ENCODE measurements at regions of chr11 and their contacts with region 1.

Region 1: GRCh38 chr11:101848262-101848661 is 66.5 kb upstream of the CEP126 start:
- DNase-seq: no peak
- H3K4me3 ChIP-seq: no peak overlapping the region
- CTCF ChIP-seq: no peak

Region 2: DNA sequence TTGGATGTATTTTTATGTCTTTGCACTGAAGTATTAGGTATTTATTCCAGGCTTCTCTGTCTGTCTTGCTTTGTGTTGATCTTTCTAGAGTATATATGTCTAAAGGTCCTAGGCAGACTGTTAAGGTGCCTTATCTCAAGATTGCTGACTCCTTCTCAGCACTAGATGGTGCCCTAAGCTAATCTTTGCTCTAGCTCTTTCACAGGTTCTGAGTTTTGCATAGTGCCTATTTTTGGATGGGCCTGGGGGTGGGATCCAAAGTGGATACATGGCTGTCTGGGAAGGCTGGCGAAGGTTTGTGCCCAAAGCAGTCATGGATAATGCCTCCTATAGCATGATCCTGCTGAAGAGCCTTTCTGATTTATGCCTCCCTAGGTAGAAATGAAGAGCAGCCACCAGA is 419.3 kb before region 1 on chr11:
- CTCF ChIA-PET with region 1: interaction called, 78 read pairs
- POLR2A ChIA-PET with region 1: no interaction called
- DNase-seq: no peak
- H3K4me3 ChIP-seq: no peak overlapping the region
- CTCF ChIP-seq: peak; percentile 45

Region 3: DNA sequence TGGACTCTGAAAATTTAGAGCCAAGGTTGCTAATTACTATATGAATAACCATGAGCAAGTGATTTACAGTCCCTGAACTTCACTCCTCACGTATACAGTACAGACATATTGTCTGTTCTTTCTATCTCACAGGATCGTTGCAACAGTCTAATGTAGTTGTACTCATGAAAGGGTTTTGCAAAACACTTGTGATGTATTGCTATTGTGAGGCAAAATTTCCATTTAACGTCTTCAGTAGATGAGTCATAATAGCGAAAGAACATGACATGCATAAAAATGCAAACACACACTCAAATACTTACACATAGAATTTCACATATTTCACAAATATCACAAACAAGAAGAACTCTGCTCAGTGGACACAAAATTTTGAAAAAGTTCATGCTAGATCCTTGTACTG is 129.9 kb before region 1 on chr11:
- CTCF ChIA-PET with region 1: no interaction called
- POLR2A ChIA-PET with region 1: no interaction called
- DNase-seq: no peak
- H3K4me3 ChIP-seq: no peak overlapping the region
- CTCF ChIP-seq: no peak

Region 4: DNA sequence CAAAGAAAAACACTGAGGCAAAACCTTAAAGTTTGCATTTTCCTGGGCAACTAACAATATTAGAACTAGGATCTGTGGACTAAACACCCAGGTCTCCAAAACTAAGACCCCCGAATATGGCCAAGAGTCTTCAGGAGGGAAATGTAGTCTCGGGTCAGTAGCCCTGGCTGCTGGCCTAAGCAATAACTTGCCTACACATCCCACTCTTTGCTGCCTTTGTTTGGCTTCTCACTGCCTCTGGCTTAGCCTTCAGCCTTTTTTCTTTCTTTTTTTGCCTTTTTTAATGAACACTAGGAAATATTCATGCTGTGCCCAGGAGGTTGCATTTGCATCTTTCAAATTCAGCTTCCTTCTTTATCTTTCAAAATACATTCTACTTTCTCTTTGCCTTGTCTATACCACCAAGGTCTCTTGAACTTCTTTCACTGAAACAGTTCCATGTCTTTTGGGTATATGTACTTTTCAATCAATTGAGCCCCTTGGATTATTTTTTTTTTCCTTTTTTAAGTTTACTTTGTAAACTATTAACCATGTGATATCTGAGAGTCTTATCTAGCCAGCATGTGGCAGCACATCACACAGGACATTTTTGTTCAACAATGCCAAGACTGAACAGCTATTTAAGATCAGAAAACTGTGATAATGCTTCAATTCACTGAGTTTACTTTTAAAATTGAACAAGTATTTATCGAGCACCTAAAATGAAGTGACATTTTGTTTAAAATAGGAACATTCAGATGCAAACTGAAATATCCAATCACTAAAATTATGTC is 99.5 kb before region 1 on chr11:
- CTCF ChIA-PET with region 1: no interaction called
- POLR2A ChIA-PET with region 1: no interaction called
- DNase-seq: no peak
- H3K4me3 ChIP-seq: no peak overlapping the region
- CTCF ChIP-seq: no peak

Region 5: DNA sequence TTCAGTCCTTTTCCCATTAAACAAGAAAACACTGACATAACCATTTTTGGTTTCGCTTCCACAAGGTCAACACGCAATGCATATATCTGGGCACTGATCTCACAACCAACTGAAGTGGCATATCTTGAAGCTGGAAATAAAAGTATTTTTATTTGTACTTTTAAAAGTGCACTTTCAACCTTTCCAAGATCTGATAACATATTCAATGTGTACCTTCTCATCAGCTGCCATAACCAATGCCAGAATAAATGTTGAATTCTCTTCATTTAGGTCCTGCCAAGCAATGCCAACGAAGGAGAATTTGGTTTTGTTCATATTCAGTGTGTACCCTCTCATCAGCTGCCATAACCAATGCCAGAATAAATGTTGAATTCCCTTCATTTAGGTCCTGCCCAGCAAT is 82.3 kb before region 1 on chr11:
- CTCF ChIA-PET with region 1: no interaction called
- POLR2A ChIA-PET with region 1: no interaction called
- DNase-seq: no peak
- H3K4me3 ChIP-seq: no peak overlapping the region
- CTCF ChIP-seq: no peak

Region 6: GRCh38 chr11:101870510-101870909 is 22.2 kb after region 1 on chr11:
- CTCF ChIA-PET with region 1: no interaction called
- POLR2A ChIA-PET with region 1: no interaction called
- DNase-seq: no peak
- H3K4me3 ChIP-seq: no peak overlapping the region
- CTCF ChIP-seq: no peak

Measured in AG04449 (cell line).